ENCODE measurements at regions of chr11 and their contacts with region 1.

Region 1: GRCh38 chr11:33829433-33830141 is 55.3 kb upstream of the FBXO3 start:
- DNase-seq: peak; percentile 9 to 77 (median 48)
- ATAC-seq: peak; percentile 88
- H3K4me3 ChIP-seq: peak overlapping the region; percentile 28
- H3K4me3 Mint-ChIP-seq: peak overlapping the region; percentile 79
- H3K27ac ChIP-seq: no peak overlapping the region
- H3K27ac Mint-ChIP-seq: no peak overlapping the region
- H3K4me1 ChIP-seq: peaks cover 11% of the 10 kb centered on the region
- H3K4me1 Mint-ChIP-seq: peaks cover 7% of the 10 kb centered on the region
- H3K27me3 ChIP-seq: peaks cover 35 to 54% of the 10 kb centered on the region in 2 experiments
- H3K27me3 Mint-ChIP-seq: peaks cover 69% of the 10 kb centered on the region
- CTCF ChIP-seq: peak; percentile 67

Region 2: DNA sequence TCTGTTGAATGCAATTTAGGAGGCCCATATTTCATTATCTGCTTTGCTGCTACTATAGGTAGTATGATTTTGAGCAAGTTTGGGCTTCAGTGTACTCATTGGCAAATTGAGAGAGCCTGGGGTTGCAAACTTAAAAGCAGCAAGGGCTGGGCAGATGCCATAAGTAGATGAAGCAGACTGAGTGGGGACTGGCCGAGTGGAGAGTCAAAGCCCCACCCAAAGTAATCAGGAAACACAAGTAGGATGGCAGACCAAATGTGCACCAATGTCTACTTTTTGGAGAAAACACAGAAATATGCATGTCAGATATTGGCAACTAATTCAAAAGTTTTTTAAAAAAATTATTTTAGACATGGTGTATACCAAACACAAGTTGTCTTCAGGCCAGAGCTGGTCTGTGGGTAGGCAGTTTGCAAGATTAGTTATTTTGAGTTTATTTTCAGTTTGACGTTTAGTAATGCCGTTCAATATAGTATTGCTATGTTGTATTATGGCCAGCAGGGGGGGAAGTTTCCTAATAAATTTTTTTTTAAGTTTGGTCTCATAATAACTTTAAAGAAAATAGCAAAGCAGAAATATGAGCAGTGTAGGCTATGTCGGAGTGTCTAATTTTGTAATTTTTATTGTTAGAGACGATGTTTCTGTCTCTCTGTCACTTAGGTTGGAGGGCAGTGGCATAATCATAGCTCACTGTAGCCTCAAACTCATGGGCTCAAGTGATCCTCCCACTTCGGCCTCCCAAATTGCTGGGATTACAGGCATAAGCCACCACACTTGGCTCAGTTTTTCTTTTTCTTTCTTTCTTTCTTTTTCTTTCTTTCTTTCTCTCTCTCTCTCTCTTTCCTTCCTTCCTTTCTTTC is 467.3 kb before region 1 on chr11:
- CTCF ChIA-PET with region 1: no interaction called
- POLR2A ChIA-PET with region 1: no interaction called
- intact Hi-C with region 1: loop called (anchors 1 kb)
- DNase-seq: peak in 4 of 14 experiments; percentile 24 to 70 (median 54)
- ATAC-seq: peak; percentile 70
- H3K4me3 ChIP-seq: no peak overlapping the region
- H3K4me3 Mint-ChIP-seq: no peak overlapping the region
- H3K27ac ChIP-seq: no peak overlapping the region
- H3K27ac Mint-ChIP-seq: no peak overlapping the region
- H3K4me1 ChIP-seq: peaks cover 2% of the 10 kb centered on the region
- H3K4me1 Mint-ChIP-seq: peaks cover 5% of the 10 kb centered on the region
- H3K27me3 ChIP-seq: peaks cover 0 to 2% of the 10 kb centered on the region in 2 experiments
- H3K27me3 Mint-ChIP-seq: peaks cover 11% of the 10 kb centered on the region
- CTCF ChIP-seq: peak; percentile 79

Region 3: DNA sequence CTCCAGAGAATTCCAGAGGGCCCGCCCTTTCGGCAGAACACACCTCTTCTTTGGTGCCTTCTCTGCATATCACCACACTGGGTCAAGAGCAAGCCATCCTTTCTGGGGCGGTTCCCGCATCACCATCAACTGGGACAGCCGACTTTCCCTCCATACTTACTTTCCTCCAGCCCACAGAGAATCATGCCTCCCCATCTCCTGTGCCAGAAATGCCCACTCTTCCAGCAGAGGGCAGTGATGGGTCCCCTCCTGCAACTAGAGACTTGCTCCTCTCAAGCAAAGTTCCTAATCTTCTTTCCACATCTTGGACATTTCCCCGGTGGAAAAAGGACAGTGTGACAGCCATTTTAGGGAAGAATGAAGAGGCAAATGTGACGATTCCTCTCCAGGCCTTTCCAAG is 286.7 kb before region 1 on chr11:
- CTCF ChIA-PET with region 1: no interaction called
- POLR2A ChIA-PET with region 1: no interaction called
- intact Hi-C with region 1: loop called in 1 of 2 experiments (anchors 5 kb)
- DNase-seq: peak in 11 of 14 experiments; percentile 5 to 52 (median 12)
- ATAC-seq: no peak
- H3K4me3 ChIP-seq: no peak overlapping the region
- H3K4me3 Mint-ChIP-seq: no peak overlapping the region
- H3K27ac ChIP-seq: no peak overlapping the region
- H3K27ac Mint-ChIP-seq: no peak overlapping the region
- H3K4me1 ChIP-seq: no peaks in the 10 kb centered on the region
- H3K4me1 Mint-ChIP-seq: no peaks in the 10 kb centered on the region
- H3K27me3 ChIP-seq: peaks cover 3 to 14% of the 10 kb centered on the region in 2 experiments
- H3K27me3 Mint-ChIP-seq: peaks cover 58% of the 10 kb centered on the region
- CTCF ChIP-seq: peak; percentile 46

Region 4: GRCh38 chr11:33700425-33701271 is 128.9 kb before region 1 on chr11 and contains the start of gene C11orf91:
- CTCF ChIA-PET with region 1: no interaction called
- POLR2A ChIA-PET with region 1: no interaction called
- intact Hi-C with region 1: no loop called
- DNase-seq: peak; percentile 84 to 98 (median 94)
- ATAC-seq: peak; percentile 93
- H3K4me3 ChIP-seq: peak within 1 kb of the TSS; percentile 68
- H3K4me3 Mint-ChIP-seq: peak within 1 kb of the TSS; percentile 95
- H3K27ac ChIP-seq: no peak within 1 kb of the TSS
- H3K27ac Mint-ChIP-seq: peak within 1 kb of the TSS; percentile 64
- H3K4me1 ChIP-seq: peaks cover 14% of the 10 kb centered on the region
- H3K4me1 Mint-ChIP-seq: peaks cover 33% of the 10 kb centered on the region
- H3K27me3 ChIP-seq: no peaks in the 10 kb centered on the region
- H3K27me3 Mint-ChIP-seq: peaks cover 10% of the 10 kb centered on the region
- CTCF ChIP-seq: no peak
- total RNA-seq, gene C11orf91: 0.45 TPM in 1 of 2 experiments, not detected in the other

Region 5: GRCh38 chr11:33716236-33716635 is 113.4 kb before region 1 on chr11:
- CTCF ChIA-PET with region 1: no interaction called
- POLR2A ChIA-PET with region 1: no interaction called
- intact Hi-C with region 1: loop called in 1 of 2 experiments (anchors 1 kb)
- DNase-seq: peak in 4 of 14 experiments; percentile 21 to 46 (median 37)
- ATAC-seq: no peak
- H3K4me3 ChIP-seq: no peak overlapping the region
- H3K4me3 Mint-ChIP-seq: no peak overlapping the region
- H3K27ac ChIP-seq: no peak overlapping the region
- H3K27ac Mint-ChIP-seq: no peak overlapping the region
- H3K4me1 ChIP-seq: no peaks in the 10 kb centered on the region
- H3K4me1 Mint-ChIP-seq: peaks cover 4% of the 10 kb centered on the region
- H3K27me3 ChIP-seq: no peaks in the 10 kb centered on the region
- H3K27me3 Mint-ChIP-seq: no peaks in the 10 kb centered on the region
- CTCF ChIP-seq: peak; percentile 22

Region 6: DNA sequence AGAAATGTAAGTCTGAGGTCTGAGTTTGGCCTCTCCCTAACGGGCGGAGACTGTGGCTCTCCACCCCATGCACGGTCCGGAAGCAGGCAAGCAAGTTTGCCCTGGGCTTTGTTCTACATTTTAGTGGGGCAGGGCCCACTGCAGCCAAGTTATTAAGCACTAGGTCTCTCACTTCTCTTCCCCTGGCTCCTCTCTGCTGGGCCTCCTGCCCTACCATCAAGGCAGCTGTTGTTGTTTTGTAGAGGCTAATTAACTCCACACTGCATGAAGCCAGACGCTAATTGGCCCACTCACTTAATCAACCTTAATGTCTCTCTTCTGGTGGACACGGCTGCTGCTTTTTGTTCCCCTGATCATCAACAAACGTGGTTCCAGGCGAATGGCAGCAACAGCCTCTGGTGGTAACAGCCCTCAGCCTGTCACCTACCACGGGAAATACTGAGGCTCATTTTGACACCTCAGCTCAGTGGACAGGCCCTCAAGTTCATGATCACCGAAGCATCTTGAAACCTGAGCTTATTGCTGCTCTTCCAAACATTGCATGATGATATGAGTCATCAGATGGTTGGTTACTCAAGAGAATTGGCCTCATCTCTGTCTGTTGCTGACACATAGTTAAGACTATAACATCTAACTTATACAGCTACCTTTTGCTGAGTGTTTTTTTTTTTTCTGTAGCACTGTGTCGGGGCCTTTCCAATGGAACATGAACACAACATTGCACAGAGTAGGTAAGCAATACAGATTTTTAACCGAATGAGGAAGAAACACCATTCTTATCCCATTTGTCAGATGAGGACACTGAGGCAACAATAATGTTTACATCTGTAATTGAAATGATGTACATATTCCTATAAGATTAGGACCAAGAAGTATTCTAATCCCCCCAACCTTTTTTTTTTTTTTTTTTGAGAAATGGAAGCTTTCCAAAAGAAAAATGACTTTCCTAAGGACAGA is 83.1 kb after region 1 on chr11:
- CTCF ChIA-PET with region 1: no interaction called
- POLR2A ChIA-PET with region 1: no interaction called
- intact Hi-C with region 1: no loop called
- DNase-seq: peak in 3 of 14 experiments; percentile 13 to 64 (median 51)
- ATAC-seq: no peak
- H3K4me3 ChIP-seq: no peak overlapping the region
- H3K4me3 Mint-ChIP-seq: no peak overlapping the region
- H3K27ac ChIP-seq: no peak overlapping the region
- H3K27ac Mint-ChIP-seq: no peak overlapping the region
- H3K4me1 ChIP-seq: no peaks in the 10 kb centered on the region
- H3K4me1 Mint-ChIP-seq: peaks cover 2% of the 10 kb centered on the region
- H3K27me3 ChIP-seq: peaks cover 6 to 11% of the 10 kb centered on the region in 2 experiments
- H3K27me3 Mint-ChIP-seq: peaks cover 56% of the 10 kb centered on the region
- CTCF ChIP-seq: no peak